ENCODE measurements at regions of chr19 and their contacts with region 1.

Region 1: GRCh38 chr19:1942078-1942933 is 1.3 kb downstream of the CSNK1G2 start:
- DNase-seq: peak; percentile 65 to 89 (median 84)
- ATAC-seq: peak; percentile 64 to 70
- H3K4me3 Mint-ChIP-seq: peak overlapping the region; percentile 93 to 98 (median 97)
- H3K27ac Mint-ChIP-seq: peak overlapping the region; percentile 94 to 100 (median 98)
- H3K4me1 Mint-ChIP-seq: peaks cover 16 to 52% (median 34%) of the 10 kb centered on the region in 4 donors
- H3K27me3 Mint-ChIP-seq: no peaks in the 10 kb centered on the region

Region 2: GRCh38 chr19:1855040-1855827 is 87.1 kb before region 1 on chr19:
- POLR2A ChIA-PET with region 1: interaction called, 11 read pairs
- DNase-seq: peak; percentile 65 to 92 (median 70)
- ATAC-seq: peak; percentile 49 to 54
- H3K4me3 Mint-ChIP-seq: peak overlapping the region; percentile 78 to 98 (median 85)
- H3K27ac Mint-ChIP-seq: peak overlapping the region; percentile 84 to 98 (median 92)
- H3K4me1 Mint-ChIP-seq: peaks cover 24 to 70% (median 67%) of the 10 kb centered on the region in 4 donors
- H3K27me3 Mint-ChIP-seq: no peaks in the 10 kb centered on the region

Region 3: GRCh38 chr19:1929021-1929742 is 13.1 kb before region 1 on chr19:
- POLR2A ChIA-PET with region 1: interaction called, 26 read pairs
- DNase-seq: peak; percentile 68 to 87 (median 80)
- ATAC-seq: peak; percentile 89
- H3K4me3 Mint-ChIP-seq: peak overlapping the region; percentile 75 to 88 (median 82)
- H3K27ac Mint-ChIP-seq: peak overlapping the region in 8 of 10 donors; percentile 53 to 93 (median 85)
- H3K4me1 Mint-ChIP-seq: peaks cover 7 to 36% (median 25%) of the 10 kb centered on the region in 4 donors
- H3K27me3 Mint-ChIP-seq: no peaks in the 10 kb centered on the region

Region 4: GRCh38 chr19:1955171-1956112 is 13.1 kb after region 1 on chr19:
- POLR2A ChIA-PET with region 1: no interaction called
- DNase-seq: no peak
- ATAC-seq: no peak
- H3K4me3 Mint-ChIP-seq: no peak overlapping the region
- H3K27ac Mint-ChIP-seq: no peak overlapping the region
- H3K4me1 Mint-ChIP-seq: peaks cover 10 to 46% (median 19%) of the 10 kb centered on the region in 4 donors
- H3K27me3 Mint-ChIP-seq: no peaks in the 10 kb centered on the region

Region 5: DNA sequence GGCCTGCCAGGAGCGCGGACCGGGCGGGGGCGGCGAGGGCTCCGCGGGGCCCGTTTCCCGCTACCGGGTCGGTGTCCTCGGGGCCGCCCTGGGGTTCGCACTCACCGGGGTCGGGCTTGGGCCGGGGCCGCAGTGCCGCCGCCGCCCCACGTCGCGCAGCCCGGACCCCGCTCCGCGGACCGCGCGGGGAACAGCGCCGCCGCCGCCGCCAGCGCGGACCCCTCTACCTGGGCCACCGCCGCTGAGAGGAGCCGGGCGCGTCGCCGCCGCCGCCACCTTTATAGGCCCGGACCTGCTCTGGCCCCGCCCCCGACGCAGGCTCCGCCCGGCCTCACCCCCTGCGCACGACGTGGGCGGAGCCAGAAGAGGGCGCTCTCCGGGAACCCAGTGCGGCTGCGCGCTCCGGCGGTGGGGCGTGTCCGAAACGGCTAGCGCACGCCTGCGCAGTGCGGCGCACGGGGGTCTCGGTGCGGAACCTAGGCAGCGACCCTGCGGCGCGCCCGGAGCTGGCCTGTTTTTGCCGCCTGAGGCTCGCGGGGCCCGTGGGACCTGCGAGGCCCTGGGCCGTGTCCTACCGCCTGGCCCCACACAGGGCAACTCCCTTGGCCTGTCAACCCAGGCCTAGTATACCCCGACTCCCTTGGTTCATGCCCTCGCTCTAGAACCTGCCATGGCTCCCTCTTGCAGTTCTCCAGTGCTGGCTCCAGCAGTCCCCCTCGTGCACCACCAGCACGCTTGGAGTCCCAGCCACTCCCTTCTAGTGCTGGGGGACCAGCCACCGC is 108.9 kb after region 1 on chr19 and contains the start of gene MKNK2:
- POLR2A ChIA-PET with region 1: interaction called, 10 read pairs
- DNase-seq: peak; percentile 85 to 99 (median 96)
- ATAC-seq: peak; percentile 76
- H3K4me3 Mint-ChIP-seq: peak within 1 kb of the TSS; percentile 80 to 92 (median 88)
- H3K27ac Mint-ChIP-seq: peak within 1 kb of the TSS; percentile 83 to 97 (median 96)
- H3K4me1 Mint-ChIP-seq: peaks cover 19 to 63% (median 56%) of the 10 kb centered on the region in 4 donors
- H3K27me3 Mint-ChIP-seq: no peaks in the 10 kb centered on the region
- polyA plus RNA-seq, gene MKNK2: 26.1 to 47.1 (median 30.2) TPM